Mucosa of descending colon (tissue), 3 donors: ENCODE measurements at regions of chr2 and their contacts with region 1.

Region 1: DNA sequence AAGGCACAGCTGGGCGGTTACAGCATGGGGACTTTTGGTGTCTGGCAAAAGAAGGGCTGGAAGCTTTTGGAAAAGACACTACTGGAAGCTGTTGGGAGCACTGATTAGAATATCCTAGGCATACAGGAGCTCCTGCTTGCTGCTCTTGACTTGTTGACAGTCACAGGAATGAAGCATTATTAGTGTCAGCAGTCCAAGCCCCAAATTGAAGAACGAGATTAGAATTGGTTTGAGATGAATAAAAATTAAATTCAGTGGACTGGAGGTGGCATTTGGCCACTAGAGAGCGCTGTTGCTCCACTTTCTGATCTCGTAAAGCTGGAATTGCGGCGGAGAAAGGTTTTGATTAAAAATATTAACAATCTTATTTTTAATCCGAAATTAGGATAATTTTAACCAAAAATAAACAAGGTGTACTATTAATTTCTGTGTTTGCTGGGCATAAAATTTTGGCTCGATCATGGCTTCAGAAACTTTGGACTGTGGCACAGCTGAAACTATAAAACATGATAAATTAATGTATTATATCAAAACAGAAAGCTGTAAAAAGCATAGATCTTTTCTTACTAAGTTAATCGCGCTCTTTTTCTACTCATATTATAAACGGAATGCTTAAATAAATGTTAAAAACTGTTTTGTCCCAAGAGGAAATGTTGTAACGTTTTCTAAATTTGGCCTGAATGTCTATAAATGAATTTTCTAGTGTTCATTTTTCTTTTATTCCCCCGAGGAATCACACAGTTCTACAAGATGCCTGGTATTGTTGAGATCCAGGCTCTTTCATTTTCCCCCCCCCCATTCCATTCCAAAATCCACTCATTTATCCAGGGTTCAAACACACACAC is 2.4 kb upstream of the HOXD8 start:
- DNase-seq: peak in 2 of 3 donors; percentile 64 to 91
- ATAC-seq: no peak
- H3K4me3 ChIP-seq: no peak overlapping the region
- H3K4me1 ChIP-seq: peaks cover 21% of the 10 kb centered on the region
- CTCF ChIP-seq: peak; percentile 73

Region 2: GRCh38 chr2:176157499-176158185 is 30.5 kb after region 1 on chr2:
- intact Hi-C with region 1: no loop called
- DNase-seq: peak in 2 of 3 donors; percentile 71 to 77
- ATAC-seq: peak; percentile 79
- H3K4me3 ChIP-seq: no peak overlapping the region
- H3K4me1 ChIP-seq: peaks cover 15% of the 10 kb centered on the region
- CTCF ChIP-seq: no peak

Region 3: GRCh38 chr2:176638167-176639015 is 511.2 kb after region 1 on chr2:
- intact Hi-C with region 1: loop called (anchors 5 kb)
- DNase-seq: peak; percentile 71 to 83 (median 81)
- ATAC-seq: peak; percentile 94
- H3K4me3 ChIP-seq: peak overlapping the region; percentile 27
- H3K4me1 ChIP-seq: no peaks in the 10 kb centered on the region
- CTCF ChIP-seq: peak; percentile 51

Region 4: DNA sequence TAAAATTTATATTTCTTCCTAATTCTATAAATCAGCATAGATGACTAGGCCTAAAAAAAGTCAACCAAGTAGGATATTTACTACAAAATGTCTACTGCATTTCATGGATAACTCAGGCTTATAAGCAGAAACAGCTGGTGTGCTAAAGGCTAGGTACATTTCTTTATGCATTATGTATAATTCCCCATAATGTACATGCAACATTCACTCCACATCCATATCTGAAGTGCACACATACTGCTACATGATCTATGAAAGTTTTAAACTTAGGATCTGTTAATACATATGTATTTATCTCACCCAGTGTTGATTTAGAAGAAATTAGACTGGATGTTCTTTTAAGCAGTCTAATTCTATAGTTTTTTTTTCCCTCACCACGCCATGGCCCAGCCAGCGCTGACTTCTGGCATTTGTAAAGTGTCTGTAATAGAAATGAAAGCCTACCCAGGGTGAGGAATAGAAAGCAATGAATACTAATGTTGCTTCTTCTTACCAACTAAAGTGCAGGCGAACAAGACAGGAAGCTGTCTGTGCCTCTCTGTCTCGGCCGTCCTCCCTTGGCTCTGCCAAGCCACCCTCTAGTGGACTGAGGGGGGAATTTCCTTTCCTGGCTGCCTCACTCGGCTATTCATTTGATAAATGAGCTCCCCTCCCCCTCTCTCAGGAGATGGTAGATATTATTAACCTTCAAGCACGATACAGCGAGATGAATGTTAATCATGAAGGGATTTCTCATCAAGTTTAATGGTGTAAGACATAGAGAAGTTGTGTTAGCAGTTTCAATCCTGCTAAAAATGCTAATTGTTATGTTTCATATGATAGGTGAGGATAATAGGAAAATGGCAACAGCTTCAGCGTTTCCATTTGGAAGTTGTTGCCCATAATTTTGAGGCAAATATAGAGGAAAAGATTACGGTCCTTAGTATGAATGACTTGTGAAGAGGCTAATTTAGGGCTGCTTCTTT is 526.6 kb after region 1 on chr2:
- intact Hi-C with region 1: loop called in 1 of 2 experiments (anchors 5 kb)
- DNase-seq: peak; percentile 50 to 69 (median 57)
- ATAC-seq: peak; percentile 91
- H3K4me3 ChIP-seq: no peak overlapping the region
- H3K4me1 ChIP-seq: no peaks in the 10 kb centered on the region
- CTCF ChIP-seq: peak; percentile 35

Region 5: GRCh38 chr2:176814306-176815052 is 687.3 kb after region 1 on chr2:
- intact Hi-C with region 1: loop called in 1 of 2 experiments (anchors 10 kb)
- DNase-seq: no peak
- ATAC-seq: peak; percentile 65
- H3K4me3 ChIP-seq: no peak overlapping the region
- H3K4me1 ChIP-seq: no peaks in the 10 kb centered on the region
- CTCF ChIP-seq: peak; percentile 41

Region 6: DNA sequence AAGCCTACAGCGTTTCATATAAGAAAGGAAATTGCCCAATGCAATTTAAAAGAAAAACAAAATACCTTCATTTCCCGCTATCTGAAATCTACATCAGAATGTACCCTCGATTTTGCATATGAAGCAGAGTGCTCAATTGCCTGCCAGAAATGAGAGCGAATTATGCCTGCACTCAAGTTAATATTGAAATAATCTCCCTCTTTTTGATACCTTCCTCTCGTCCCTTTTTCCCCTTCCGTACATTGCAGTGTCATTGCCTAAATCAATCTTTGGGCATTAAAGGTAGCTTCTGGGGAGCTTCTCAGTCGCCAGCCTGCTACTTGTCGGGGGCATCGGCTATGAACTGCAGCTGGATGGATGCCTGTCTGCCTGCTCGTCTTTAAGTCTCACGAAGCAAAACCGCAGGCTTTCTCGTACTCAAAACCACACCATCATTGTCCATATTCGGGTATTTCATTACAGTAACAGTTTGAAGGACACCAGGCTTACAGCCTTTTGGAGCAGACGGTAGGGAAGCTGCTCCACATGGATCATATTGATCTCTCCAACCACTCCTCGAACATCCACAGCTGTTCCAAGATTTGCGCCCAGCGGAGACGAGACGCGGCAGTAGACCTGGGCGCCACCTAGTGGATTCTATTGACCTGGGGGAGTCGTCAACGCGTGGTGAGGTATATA is 1021.5 kb after region 1 on chr2:
- intact Hi-C with region 1: loop called in 1 of 2 experiments (anchors 10 kb)
- DNase-seq: peak; percentile 63 to 90 (median 81)
- ATAC-seq: peak; percentile 98
- H3K4me3 ChIP-seq: no peak overlapping the region
- H3K4me1 ChIP-seq: no peaks in the 10 kb centered on the region
- CTCF ChIP-seq: peak; percentile 64